ENCODE measurements at regions of chr12 and their contacts with region 1.

Region 1: GRCh38 chr12:57765042-57765697 is 1.7 kb downstream of the CYP27B1 start:
- DNase-seq: peak in 1 of 2 experiments; percentile 80
- H3K4me3 ChIP-seq: peak overlapping the region; percentile 39 to 66 (median 64)
- H3K27ac ChIP-seq: no peak overlapping the region
- H3K4me1 ChIP-seq: peaks cover 13 to 22% (median 19%) of the 10 kb centered on the region in 4 experiments
- H3K27me3 ChIP-seq: peaks cover 22 to 39% (median 37%) of the 10 kb centered on the region in 4 experiments
- CTCF ChIP-seq: peak in 2 of 3 experiments; percentile 41 to 61; a peak in 3 of 4 replicates
- EP300 ChIP-seq: no peak
- POLR2A ChIP-seq: no peak; a peak in 1 of 3 replicates
- RAD21 ChIP-seq: peak; percentile 1 to 18; a peak in 2 of 4 replicates

Region 2: DNA sequence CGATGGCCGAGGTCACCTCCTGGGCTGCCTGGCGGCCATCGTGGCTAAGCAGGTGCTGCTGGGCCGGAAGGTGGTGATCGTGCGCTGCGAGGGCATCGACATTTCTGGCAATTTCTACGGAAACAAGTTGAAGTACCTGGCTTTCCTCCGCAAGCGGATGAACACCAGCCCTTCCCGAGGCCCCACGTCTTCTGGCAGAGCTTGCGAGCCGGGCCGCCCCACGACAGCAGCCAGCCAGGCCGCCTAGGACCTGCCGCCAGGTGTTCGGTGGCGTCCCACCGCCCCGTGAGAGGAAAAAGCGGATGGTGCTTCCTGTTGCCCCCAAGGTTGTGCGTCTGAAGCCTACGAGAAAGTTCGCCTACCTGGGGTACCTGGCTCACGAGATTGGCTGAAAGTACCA is 90.5 kb before region 1 on chr12:
- CTCF ChIA-PET with region 1: no interaction called
- POLR2A ChIA-PET with region 1: no interaction called
- DNase-seq: no peak
- H3K4me3 ChIP-seq: no peak overlapping the region
- H3K27ac ChIP-seq: no peak overlapping the region
- H3K4me1 ChIP-seq: no peaks in the 10 kb centered on the region
- H3K27me3 ChIP-seq: no peaks in the 10 kb centered on the region
- CTCF ChIP-seq: no peak
- EP300 ChIP-seq: no peak
- POLR2A ChIP-seq: no peak
- RAD21 ChIP-seq: no peak

Region 3: DNA sequence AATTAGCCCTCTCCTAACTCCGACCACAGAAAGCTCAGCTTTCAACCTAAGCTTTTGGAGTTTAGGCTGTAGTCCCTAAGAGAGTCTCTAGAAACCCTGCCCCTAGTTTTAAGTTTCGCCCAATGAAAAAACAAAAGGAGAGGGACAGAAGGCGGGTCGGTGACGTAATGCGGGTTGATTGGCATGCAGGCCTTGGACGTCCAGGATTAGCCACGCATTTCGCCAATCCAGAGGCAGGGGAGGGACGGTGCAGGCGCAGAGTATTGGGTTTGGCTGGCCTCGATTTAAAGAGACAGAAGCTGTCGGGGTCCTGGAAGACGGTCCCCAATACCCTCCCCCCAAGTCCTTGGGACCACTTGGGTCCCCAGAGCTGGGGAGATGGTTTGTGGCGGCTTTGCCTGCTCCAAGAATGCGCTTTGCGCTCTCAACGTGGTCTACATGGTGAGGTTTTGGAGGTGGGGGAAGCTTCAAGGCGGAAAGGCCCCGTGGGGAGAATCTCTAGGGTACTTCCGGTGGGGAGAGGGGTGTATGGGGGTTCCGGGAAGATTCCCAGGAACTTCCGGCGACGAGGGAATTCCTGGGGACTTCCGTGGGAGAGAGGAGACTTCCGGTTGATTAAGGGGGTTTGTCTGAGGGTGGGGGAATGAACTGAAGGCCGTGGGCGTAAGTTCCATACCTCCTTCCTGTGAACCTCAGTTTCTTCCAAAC is 20.2 kb before region 1 on chr12 and contains the start of gene TSPAN31:
- CTCF ChIA-PET with region 1: interaction called, 6 read pairs
- POLR2A ChIA-PET with region 1: interaction called, 35 read pairs
- DNase-seq: peak; percentile 91
- H3K4me3 ChIP-seq: peak within 1 kb of the TSS; percentile 66 to 85 (median 74)
- H3K27ac ChIP-seq: peak within 1 kb of the TSS; percentile 89
- H3K4me1 ChIP-seq: peaks cover 0 to 5% (median 4%) of the 10 kb centered on the region in 4 experiments; a peak in 5 of 7 replicates
- H3K27me3 ChIP-seq: peaks cover 6 to 21% (median 17%) of the 10 kb centered on the region in 4 experiments
- CTCF ChIP-seq: no peak
- EP300 ChIP-seq: no peak; a peak in 1 of 3 replicates
- POLR2A ChIP-seq: peak; percentile 85 to 95
- RAD21 ChIP-seq: no peak
- total RNA-seq, gene TSPAN31: 15.2 and 15.8 TPM in 2 replicates

Region 4: GRCh38 chr12:57751788-57752667 is 13.1 kb before region 1 on chr12 and contains the start of gene CDK4:
- CTCF ChIA-PET with region 1: interaction called, 40 read pairs
- POLR2A ChIA-PET with region 1: interaction called, 23 read pairs
- DNase-seq: peak; percentile 99 to 100
- H3K4me3 ChIP-seq: peak within 1 kb of the TSS; percentile 96 to 99 (median 98)
- H3K27ac ChIP-seq: peak within 1 kb of the TSS; percentile 86
- H3K4me1 ChIP-seq: peaks cover 3 to 26% (median 7%) of the 10 kb centered on the region in 4 experiments; a peak in 6 of 7 replicates
- H3K27me3 ChIP-seq: peaks cover 8 to 22% (median 20%) of the 10 kb centered on the region in 4 experiments
- CTCF ChIP-seq: no peak
- EP300 ChIP-seq: peak in 1 of 2 experiments; percentile 76; a peak in 1 of 3 replicates
- POLR2A ChIP-seq: peak; percentile 79
- RAD21 ChIP-seq: no peak
- total RNA-seq, gene CDK4: 174 and 180 TPM in 2 replicates

Region 5: DNA sequence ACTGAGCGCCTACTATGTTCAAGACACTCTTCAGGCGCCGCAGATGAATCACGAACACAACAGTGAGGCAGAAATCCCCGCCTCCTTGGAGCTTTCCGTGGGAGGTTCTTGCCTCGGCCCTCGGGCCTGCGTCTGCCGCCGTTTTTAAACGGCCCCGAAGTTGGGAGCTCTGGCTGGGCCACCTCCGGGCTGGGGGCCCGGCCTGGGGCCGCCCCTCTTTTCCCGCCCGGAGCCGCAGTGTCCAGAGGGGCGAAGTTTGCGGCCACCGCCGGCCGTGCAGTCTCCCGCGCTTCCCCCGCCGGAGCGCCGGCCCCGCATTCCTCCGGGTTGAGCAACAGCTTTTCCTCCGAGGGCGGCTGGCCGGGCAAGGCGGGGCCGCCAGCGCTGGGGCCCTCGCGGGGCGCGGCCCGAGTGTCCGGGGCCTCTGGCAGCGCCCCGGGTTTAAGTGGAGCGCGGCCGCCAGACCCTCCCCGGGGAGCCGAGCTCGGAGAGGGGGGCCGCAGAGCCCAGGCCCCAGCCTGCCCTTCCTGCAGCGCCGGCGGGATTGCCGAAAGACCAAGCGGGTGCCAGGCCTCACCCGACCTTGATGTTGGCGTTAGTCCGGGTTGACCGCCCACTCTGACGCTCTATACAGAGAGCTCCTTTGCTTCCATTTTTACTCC is 100.1 kb after region 1 on chr12:
- CTCF ChIA-PET with region 1: no interaction called
- POLR2A ChIA-PET with region 1: no interaction called
- DNase-seq: peak in 1 of 2 experiments; percentile 73
- H3K4me3 ChIP-seq: peak overlapping the region; percentile 25 to 65 (median 41)
- H3K27ac ChIP-seq: no peak overlapping the region
- H3K4me1 ChIP-seq: peaks cover 0 to 12% (median 8%) of the 10 kb centered on the region in 4 experiments; a peak in 5 of 7 replicates
- H3K27me3 ChIP-seq: peaks cover 0 to 20% (median 10%) of the 10 kb centered on the region in 4 experiments; a peak in 5 of 7 replicates
- CTCF ChIP-seq: no peak
- EP300 ChIP-seq: no peak
- POLR2A ChIP-seq: peak in 1 of 2 experiments; percentile 55; a peak in 1 of 3 replicates
- RAD21 ChIP-seq: no peak

Region 6: DNA sequence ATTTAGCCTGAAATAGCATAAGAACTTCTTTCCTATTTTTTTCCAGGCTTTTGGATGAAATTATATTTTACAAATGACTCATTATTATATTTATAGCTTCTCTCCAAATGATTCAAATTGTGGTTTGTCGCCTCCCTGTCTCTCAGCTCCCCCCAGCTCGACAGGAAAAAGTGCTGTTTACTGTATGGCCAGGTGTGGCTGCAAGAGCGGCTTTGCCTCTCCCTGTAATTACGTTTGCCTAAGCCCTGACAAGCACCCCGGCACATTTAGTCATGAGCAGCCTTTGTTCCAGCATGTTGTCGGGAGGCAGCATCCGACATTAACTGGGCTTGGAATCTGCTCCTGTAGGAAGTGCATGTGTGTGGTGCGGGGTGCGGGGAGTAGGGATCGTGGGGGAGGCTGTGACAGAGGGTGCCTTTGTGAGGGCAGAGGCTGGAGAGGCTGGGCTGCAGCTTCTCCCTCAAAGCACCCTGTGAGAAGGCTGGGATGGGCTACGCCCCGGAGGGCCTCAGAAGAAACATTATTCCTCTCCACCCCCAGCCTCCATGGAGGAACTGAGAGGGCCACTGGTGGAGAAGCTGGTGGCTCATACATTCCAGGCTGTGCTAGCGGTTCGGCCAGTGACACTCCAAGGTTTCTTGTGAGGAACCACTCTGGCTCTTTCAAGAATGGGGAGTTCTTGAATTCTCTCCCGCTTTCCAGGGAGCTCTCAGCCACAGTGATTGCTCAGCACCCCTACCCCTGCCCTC is 123.4 kb after region 1 on chr12:
- CTCF ChIA-PET with region 1: no interaction called
- POLR2A ChIA-PET with region 1: no interaction called
- DNase-seq: no peak
- H3K4me3 ChIP-seq: peak overlapping the region in 3 of 4 experiments; percentile 4 to 23 (median 19); a peak in 3 of 8 replicates
- H3K27ac ChIP-seq: peak overlapping the region; percentile 4; the same call in 1 of the 2 replicates
- H3K4me1 ChIP-seq: peaks cover 2 to 22% (median 17%) of the 10 kb centered on the region in 4 experiments
- H3K27me3 ChIP-seq: no peaks in the 10 kb centered on the region; a peak in 1 of 7 replicates
- CTCF ChIP-seq: no peak
- EP300 ChIP-seq: no peak
- POLR2A ChIP-seq: peak in 1 of 2 experiments; percentile 59; a peak in 2 of 3 replicates
- RAD21 ChIP-seq: no peak

Measured in H1 (cell line).